Mucosa of descending colon (tissue), 3 donors: ENCODE measurements at regions of chrX and their contacts with region 1.

Region 1: GRCh38 chrX:37926700-37927099 is 79.3 kb upstream of the DYNLT3 start:
- DNase-seq: peak in 1 of 3 donors; percentile 8
- ATAC-seq: peak; percentile 72
- H3K4me3 ChIP-seq: no peak overlapping the region
- H3K4me1 ChIP-seq: no peaks in the 10 kb centered on the region
- CTCF ChIP-seq: no peak

Region 2: GRCh38 chrX:38006291-38006690 is 79.6 kb after region 1 on chrX and contains the start of gene SYTL5:
- intact Hi-C with region 1: no loop called
- DNase-seq: peak in 1 of 3 donors; percentile 34
- ATAC-seq: peak; percentile 98
- H3K4me3 ChIP-seq: no peak within 1 kb of the TSS
- H3K4me1 ChIP-seq: no peaks in the 10 kb centered on the region
- CTCF ChIP-seq: no peak
- total RNA-seq, gene SYTL5: 3.0 to 11.5 (median 9.4) TPM

Region 3: GRCh38 chrX:38166478-38167083 is 239.9 kb after region 1 on chrX:
- intact Hi-C with region 1: loop called (anchors 5 to 10 kb)
- DNase-seq: peak in 1 of 3 donors; percentile 79
- ATAC-seq: peak; percentile 31
- H3K4me3 ChIP-seq: no peak overlapping the region
- H3K4me1 ChIP-seq: no peaks in the 10 kb centered on the region
- CTCF ChIP-seq: no peak

Region 4: DNA sequence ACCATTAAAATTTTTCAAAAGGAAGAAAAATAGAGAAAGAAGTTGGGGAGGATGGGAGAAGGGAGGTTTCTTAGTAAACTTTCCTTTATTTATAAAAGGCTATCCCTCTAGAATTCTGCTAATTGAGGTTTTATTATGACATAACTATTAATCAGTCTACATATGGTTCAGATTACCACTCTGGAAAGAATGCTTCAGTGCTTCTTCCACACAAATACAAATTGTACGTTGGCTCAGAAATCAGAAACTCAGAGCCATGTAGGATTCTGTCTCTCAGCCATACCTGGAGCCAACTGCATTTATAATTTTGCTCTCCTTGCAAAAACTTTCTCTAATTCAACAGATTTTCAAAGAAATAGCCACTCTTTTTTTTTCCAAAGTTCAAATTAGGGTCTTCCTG is 256.9 kb after region 1 on chrX:
- intact Hi-C with region 1: no loop called
- DNase-seq: no peak
- ATAC-seq: no peak
- H3K4me3 ChIP-seq: no peak overlapping the region
- H3K4me1 ChIP-seq: no peaks in the 10 kb centered on the region
- CTCF ChIP-seq: no peak